Activated CD4-positive, alpha-beta T cell treated with anti-CD3 and anti-CD28 coated beads, Interleukin-2, amount 10 ng/mL, durations not matched to agents 7 days and 5 days (primary cell): ENCODE measurements at regions of chr3 and their contacts with region 1.

Region 1: GRCh38 chr3:127679285-127680145 is 6.8 kb downstream of the ABTB1 start:
- DNase-seq: no peak
- H3K4me3 Mint-ChIP-seq: no peak overlapping the region
- H3K27ac Mint-ChIP-seq: no peak overlapping the region
- H3K4me1 Mint-ChIP-seq: peaks cover 8% of the 10 kb centered on the region
- H3K27me3 Mint-ChIP-seq: no peaks in the 10 kb centered on the region

Region 2: GRCh38 chr3:127697551-127698240 is 18.2 kb after region 1 on chr3:
- CTCF ChIA-PET with region 1: interaction called, 12 read pairs
- POLR2A ChIA-PET with region 1: no interaction called
- DNase-seq: peak; percentile 66
- H3K4me3 Mint-ChIP-seq: no peak overlapping the region
- H3K27ac Mint-ChIP-seq: peak overlapping the region; percentile 50
- H3K4me1 Mint-ChIP-seq: peaks cover 5% of the 10 kb centered on the region
- H3K27me3 Mint-ChIP-seq: peaks cover 1% of the 10 kb centered on the region

Region 3: DNA sequence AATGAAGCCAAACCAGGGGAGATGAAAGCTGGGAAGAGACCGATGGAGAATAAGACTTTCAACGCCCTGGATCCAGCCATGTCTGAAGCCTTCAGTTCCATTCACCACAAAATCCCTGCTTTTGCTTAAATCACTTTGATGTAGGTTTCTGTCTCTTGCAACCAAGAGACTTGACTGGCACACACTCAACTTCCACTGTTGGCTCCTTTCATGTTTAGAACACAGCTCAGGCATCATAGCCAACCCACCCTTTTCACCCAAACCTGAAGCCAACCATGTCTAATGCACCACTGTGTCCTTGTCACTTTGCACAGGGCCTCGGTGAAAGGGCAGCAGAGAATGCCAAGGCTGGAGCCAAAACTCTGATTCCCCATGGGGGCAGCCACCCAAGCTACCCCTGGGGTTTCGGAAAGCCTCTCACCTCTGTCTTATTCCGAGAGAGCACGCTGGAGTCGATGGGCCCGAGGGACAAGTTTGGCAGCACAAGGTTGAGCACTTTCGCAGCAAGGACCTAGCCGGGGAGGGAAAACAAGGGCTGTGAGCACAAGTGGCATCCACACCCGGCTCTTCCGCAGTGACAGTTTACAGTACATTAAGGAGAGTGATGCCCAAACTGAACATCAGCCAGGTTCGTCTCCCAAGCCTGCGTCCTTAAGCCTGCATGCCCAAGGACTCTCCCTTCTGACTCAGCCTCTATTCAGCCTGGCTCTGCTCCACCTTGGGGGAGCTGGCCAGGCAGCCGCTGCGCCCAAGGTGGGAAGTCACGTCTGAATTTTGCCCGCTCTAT is 30.8 kb after region 1 on chr3:
- CTCF ChIA-PET with region 1: no interaction called
- POLR2A ChIA-PET with region 1: no interaction called
- DNase-seq: no peak
- H3K4me3 Mint-ChIP-seq: no peak overlapping the region
- H3K27ac Mint-ChIP-seq: no peak overlapping the region
- H3K4me1 Mint-ChIP-seq: no peaks in the 10 kb centered on the region
- H3K27me3 Mint-ChIP-seq: no peaks in the 10 kb centered on the region